Activated T-helper 1 cell treated with anti-CD3 and anti-CD28 coated beads, Interleukin-12 subunit alpha, Interleukin-12 subunit beta, Interleukin-2, Interleukin-4 antibody, amounts not matched to agents 30 ng/mL and 10 ng/mL and 1 ng/mL, durations not matched to agents 14 hours and 24 hours and 36 hours (primary cell): ENCODE measurements at regions of chr9 and their contacts with region 1.

Region 1: GRCh38 chr9:36873247-36873875 is 160.7 kb downstream of the PAX5 start:
- DNase-seq: peak; percentile 50
- H3K4me3 Mint-ChIP-seq: no peak overlapping the region
- H3K27ac Mint-ChIP-seq: no peak overlapping the region
- H3K4me1 Mint-ChIP-seq: no peaks in the 10 kb centered on the region
- H3K27me3 Mint-ChIP-seq: peaks cover 11% of the 10 kb centered on the region

Region 2: GRCh38 chr9:36924071-36924470 is 50.7 kb after region 1 on chr9:
- intact Hi-C with region 1: loop called (anchors 5 kb)
- DNase-seq: peak; percentile 12
- H3K4me3 Mint-ChIP-seq: no peak overlapping the region
- H3K27ac Mint-ChIP-seq: peak overlapping the region; percentile 77
- H3K4me1 Mint-ChIP-seq: peaks cover 58% of the 10 kb centered on the region
- H3K27me3 Mint-ChIP-seq: no peaks in the 10 kb centered on the region

Region 3: DNA sequence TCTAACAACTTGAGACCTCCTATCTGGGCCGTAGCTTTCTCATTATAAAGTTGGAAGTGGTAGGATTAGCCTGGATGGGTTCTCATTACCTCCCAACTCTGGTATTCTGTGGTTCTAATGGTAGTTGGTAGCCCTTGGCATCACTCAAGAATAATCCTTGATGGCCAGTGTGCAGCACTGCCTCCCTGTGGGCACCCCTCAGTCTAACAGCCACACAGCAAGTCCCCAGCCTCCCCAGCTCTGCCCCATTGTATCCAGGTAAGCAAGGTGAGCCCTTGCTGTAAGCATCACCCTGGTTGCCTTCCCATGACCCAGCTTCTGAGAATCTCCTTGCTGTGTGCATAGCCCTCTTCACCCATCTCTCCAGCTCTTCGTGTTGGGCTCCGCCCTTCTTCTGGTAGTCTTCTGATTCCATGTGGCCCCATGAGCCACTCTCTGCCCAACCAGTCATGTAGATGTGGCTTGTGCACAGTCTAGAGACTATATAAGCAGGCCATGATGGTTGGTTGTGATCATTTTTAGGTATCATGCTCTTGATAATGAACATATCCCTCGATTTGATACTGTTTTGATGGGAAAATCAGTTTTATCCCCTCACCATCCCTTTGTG is 491.5 kb after region 1 on chr9:
- intact Hi-C with region 1: loop called (anchors 10 kb)
- DNase-seq: no peak
- H3K4me3 Mint-ChIP-seq: no peak overlapping the region
- H3K27ac Mint-ChIP-seq: no peak overlapping the region
- H3K4me1 Mint-ChIP-seq: no peaks in the 10 kb centered on the region
- H3K27me3 Mint-ChIP-seq: no peaks in the 10 kb centered on the region

Region 4: GRCh38 chr9:37390759-37391158 is 517.4 kb after region 1 on chr9:
- intact Hi-C with region 1: loop called (anchors 1 kb)
- DNase-seq: no peak
- H3K4me3 Mint-ChIP-seq: no peak overlapping the region
- H3K27ac Mint-ChIP-seq: no peak overlapping the region
- H3K4me1 Mint-ChIP-seq: no peaks in the 10 kb centered on the region
- H3K27me3 Mint-ChIP-seq: peaks cover under 1% of the 10 kb centered on the region